Endothelial cell of umbilical vein (primary cell): ENCODE measurements at regions of chr19 and their contacts with region 1.

Region 1: DNA sequence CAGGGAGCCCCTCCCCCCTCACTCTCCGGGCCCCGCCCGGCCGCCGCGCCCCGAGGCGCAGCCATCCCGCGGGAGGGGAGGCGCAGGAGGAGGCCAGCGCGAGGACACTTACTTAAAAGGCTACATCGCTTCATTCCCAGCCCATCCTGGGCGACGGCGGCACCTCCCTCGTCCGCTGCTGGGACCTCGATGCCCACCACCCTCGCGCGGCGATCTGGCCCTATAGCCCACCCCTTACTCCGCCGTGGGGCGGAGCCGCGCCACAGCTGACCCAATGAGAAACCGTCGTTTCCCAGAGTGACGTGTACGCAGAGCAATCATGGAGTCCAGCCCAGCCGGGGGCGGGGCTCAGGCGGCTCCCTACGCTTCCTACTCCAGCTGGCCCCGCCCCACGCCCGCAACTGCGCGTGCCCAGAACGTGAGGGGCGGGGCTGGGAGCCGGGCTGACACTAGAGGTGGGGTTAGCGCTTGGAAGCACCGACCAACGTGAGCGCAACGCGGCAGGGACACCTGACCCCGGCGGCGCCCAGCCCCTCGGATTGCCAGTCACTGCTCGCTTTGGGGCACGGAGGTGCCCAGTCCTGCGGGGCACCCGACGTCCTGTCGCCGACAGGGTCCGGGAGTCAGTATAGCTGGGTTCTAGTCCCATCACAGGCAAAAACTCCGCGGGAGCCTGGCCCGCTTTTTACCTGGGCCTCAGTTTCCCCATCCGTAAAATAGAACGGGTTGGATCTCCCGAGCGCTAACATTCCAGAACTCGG is at the start of gene ANKRD27:
- DNase-seq: peak; percentile 99
- H3K4me3 ChIP-seq: peak within 1 kb of the TSS; percentile 65 to 81 (median 74)
- H3K27ac ChIP-seq: no peak within 1 kb of the TSS
- H3K4me1 ChIP-seq: peaks cover 9% of the 10 kb centered on the region
- H3K27me3 ChIP-seq: peaks cover 16 to 24% of the 10 kb centered on the region in 2 experiments
- CTCF ChIP-seq: no peak
- POLR2A ChIP-seq: peak; percentile 59
- total RNA-seq, gene ANKRD27: 29.6 and 37.4 TPM in 2 replicates

Region 2: GRCh38 chr19:32580901-32581703 is 94.0 kb before region 1 on chr19 and contains the start of gene PDCD5:
- CTCF ChIA-PET with region 1: no interaction called
- POLR2A ChIA-PET with region 1: no interaction called
- dilution Hi-C with region 1: no loop called
- intact Hi-C with region 1: loop called (anchors 1 kb)
- DNase-seq: peak; percentile 94
- H3K4me3 ChIP-seq: peak within 1 kb of the TSS; percentile 57 to 83 (median 74)
- H3K27ac ChIP-seq: peak within 1 kb of the TSS; percentile 48
- H3K4me1 ChIP-seq: peaks cover 11% of the 10 kb centered on the region
- H3K27me3 ChIP-seq: peaks cover 0 to 2% of the 10 kb centered on the region in 2 experiments
- CTCF ChIP-seq: no peak
- POLR2A ChIP-seq: peak; percentile 85
- total RNA-seq, gene PDCD5: 154 and 168 TPM in 2 replicates

Region 3: DNA sequence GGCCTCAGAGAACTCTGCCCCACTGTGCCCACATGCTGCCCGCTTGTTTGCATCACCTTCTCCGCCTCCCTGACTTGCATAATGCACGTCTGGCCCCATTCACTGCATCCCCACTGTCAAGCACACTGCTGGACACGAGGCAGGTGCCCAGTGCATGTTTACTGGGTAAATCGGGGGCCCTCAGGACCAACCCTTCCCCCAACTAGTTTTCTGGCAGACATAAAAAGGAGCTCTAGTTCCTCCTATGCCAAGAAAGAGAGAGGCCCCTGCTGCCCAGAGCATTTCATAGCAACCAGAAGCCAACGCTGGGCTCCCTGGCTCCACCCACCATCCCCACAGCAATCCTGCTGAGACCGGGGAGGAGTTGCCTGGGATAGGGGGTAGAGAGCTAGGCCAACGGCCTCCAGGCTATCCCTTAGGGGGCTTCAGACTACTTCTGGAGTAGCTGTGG is 23.4 kb before region 1 on chr19:
- CTCF ChIA-PET with region 1: no interaction called
- POLR2A ChIA-PET with region 1: no interaction called
- dilution Hi-C with region 1: no loop called
- intact Hi-C with region 1: no loop called
- DNase-seq: no peak
- H3K4me3 ChIP-seq: no peak overlapping the region
- H3K27ac ChIP-seq: no peak overlapping the region
- H3K4me1 ChIP-seq: no peaks in the 10 kb centered on the region
- H3K27me3 ChIP-seq: no peaks in the 10 kb centered on the region
- CTCF ChIP-seq: no peak
- POLR2A ChIP-seq: no peak

Region 4: GRCh38 chr19:32691291-32691951 is 16.3 kb after region 1 on chr19 and contains the start of gene NUDT19:
- CTCF ChIA-PET with region 1: interaction called, 3 read pairs
- POLR2A ChIA-PET with region 1: no interaction called
- dilution Hi-C with region 1: no loop called
- intact Hi-C with region 1: loop called (anchors 1 kb)
- DNase-seq: peak; percentile 83
- H3K4me3 ChIP-seq: peak within 1 kb of the TSS; percentile 34 to 57 (median 44)
- H3K27ac ChIP-seq: peak within 1 kb of the TSS; percentile 74
- H3K4me1 ChIP-seq: peaks cover 21% of the 10 kb centered on the region
- H3K27me3 ChIP-seq: no peaks in the 10 kb centered on the region
- CTCF ChIP-seq: no peak
- POLR2A ChIP-seq: peak; percentile 73
- total RNA-seq, gene NUDT19: 13.8 and 14.0 TPM in 2 replicates

Region 5: DNA sequence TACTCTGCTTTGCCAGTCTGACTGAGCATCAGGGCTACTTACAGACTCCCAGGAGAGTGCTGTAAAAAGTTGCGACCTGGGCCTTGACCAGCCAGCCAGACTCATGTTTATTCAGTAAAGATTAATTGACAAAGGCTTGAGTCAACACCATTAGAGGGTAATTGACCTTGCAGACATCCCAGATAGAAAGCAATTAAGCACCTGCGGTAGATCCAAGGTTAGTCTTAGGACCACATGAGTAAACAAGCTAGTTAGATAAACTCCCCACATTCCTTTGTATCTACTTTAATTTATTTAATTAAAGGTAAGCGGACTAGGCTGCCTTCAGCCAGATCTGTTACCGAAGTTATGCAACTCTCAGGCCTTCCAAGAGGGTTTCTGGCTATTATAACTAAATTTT is 26.9 kb after region 1 on chr19:
- CTCF ChIA-PET with region 1: no interaction called
- POLR2A ChIA-PET with region 1: no interaction called
- dilution Hi-C with region 1: no loop called
- intact Hi-C with region 1: no loop called
- DNase-seq: no peak
- H3K4me3 ChIP-seq: no peak overlapping the region
- H3K27ac ChIP-seq: no peak overlapping the region
- H3K4me1 ChIP-seq: no peaks in the 10 kb centered on the region
- H3K27me3 ChIP-seq: no peaks in the 10 kb centered on the region
- CTCF ChIP-seq: no peak
- POLR2A ChIP-seq: no peak

Region 6: GRCh38 chr19:32886241-32886762 is 211.2 kb after region 1 on chr19:
- CTCF ChIA-PET with region 1: no interaction called
- POLR2A ChIA-PET with region 1: no interaction called
- dilution Hi-C with region 1: no loop called
- intact Hi-C with region 1: no loop called
- DNase-seq: no peak
- H3K4me3 ChIP-seq: no peak overlapping the region
- H3K27ac ChIP-seq: no peak overlapping the region
- H3K4me1 ChIP-seq: no peaks in the 10 kb centered on the region
- H3K27me3 ChIP-seq: no peaks in the 10 kb centered on the region
- CTCF ChIP-seq: no peak
- POLR2A ChIP-seq: no peak

Region 7: GRCh38 chr19:34171877-34172660 is 1496.9 kb after region 1 on chr19 and contains the start of gene LSM14A:
- CTCF ChIA-PET with region 1: no interaction called
- POLR2A ChIA-PET with region 1: no interaction called
- dilution Hi-C with region 1: no loop called
- intact Hi-C with region 1: loop called (anchors 5 kb)
- DNase-seq: peak; percentile 85
- H3K4me3 ChIP-seq: peak within 1 kb of the TSS; percentile 70 to 96 (median 80)
- H3K27ac ChIP-seq: peak within 1 kb of the TSS; percentile 97
- H3K4me1 ChIP-seq: peaks cover 35% of the 10 kb centered on the region
- H3K27me3 ChIP-seq: peaks cover 3 to 6% of the 10 kb centered on the region in 2 experiments
- CTCF ChIP-seq: no peak
- POLR2A ChIP-seq: peak; percentile 96
- total RNA-seq, gene LSM14A: 114 and 122 TPM in 2 replicates